HCT116 (cell line): ENCODE measurements at regions of chr4 and their contacts with region 1.

Region 1: GRCh38 chr4:158172261-158173258 is at the start of gene GASK1B:
- DNase-seq: peak; percentile 49
- ATAC-seq: peak; percentile 70
- H3K4me3 ChIP-seq: peak within 1 kb of the TSS; percentile 17 to 38; a peak in 3 of 4 replicates
- H3K27ac ChIP-seq: no peak within 1 kb of the TSS
- H3K4me1 ChIP-seq: peaks cover 13 to 30% of the 10 kb centered on the region in 2 experiments
- H3K27me3 ChIP-seq: no peaks in the 10 kb centered on the region
- CTCF ChIP-seq: peak; percentile 69 to 87 (median 74)
- POLR2A ChIP-seq: no peak
- RAD21 ChIP-seq: peak; percentile 91
- total RNA-seq, gene GASK1B: 1.3 TPM

Region 2: DNA sequence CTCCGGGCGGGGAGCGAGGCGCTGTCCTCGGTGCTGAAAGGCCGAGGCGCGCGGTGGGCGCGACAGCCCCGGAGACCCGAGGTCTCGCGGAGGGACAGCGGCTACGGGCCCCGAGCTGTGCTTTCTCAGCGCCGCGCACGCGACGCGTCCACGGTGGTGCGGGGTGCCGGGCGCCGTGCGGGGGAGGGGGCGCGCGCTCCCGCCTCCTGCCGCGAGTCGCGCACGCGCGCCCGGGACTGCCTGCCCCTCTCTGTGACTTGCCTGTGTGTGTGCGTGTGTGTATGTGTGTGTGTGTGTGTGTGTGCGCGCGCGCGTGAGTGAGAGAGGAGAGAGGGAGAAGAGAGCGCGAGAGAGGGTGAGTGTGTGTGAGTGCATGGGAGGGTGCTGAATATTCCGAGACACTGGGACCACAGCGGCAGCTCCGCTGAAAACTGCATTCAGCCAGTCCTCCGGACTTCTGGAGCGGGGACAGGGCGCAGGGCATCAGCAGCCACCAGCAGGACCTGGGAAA is 952.1 kb before region 1 on chr4 and contains the start of gene GRIA2:
- CTCF ChIA-PET with region 1: no interaction called
- POLR2A ChIA-PET with region 1: no interaction called
- RAD21 ChIA-PET with region 1: no interaction called
- intact Hi-C with region 1: loop called (anchors 5 kb)
- DNase-seq: no peak
- ATAC-seq: no peak
- H3K4me3 ChIP-seq: no peak within 1 kb of the TSS
- H3K27ac ChIP-seq: no peak within 1 kb of the TSS
- H3K4me1 ChIP-seq: no peaks in the 10 kb centered on the region
- H3K27me3 ChIP-seq: no peaks in the 10 kb centered on the region
- CTCF ChIP-seq: no peak
- POLR2A ChIP-seq: no peak
- RAD21 ChIP-seq: no peak
- total RNA-seq, gene GRIA2: not detected

Region 3: GRCh38 chr4:157992038-157992705 is 180.4 kb before region 1 on chr4:
- CTCF ChIA-PET with region 1: interaction called, 4 read pairs
- POLR2A ChIA-PET with region 1: no interaction called
- RAD21 ChIA-PET with region 1: interaction called in 1 of 2 experiments, 4 read pairs
- intact Hi-C with region 1: loop called (anchors 1 kb)
- DNase-seq: peak; percentile 73
- ATAC-seq: peak; percentile 73
- H3K4me3 ChIP-seq: peak overlapping the region; percentile 13 to 35; a peak in 3 of 4 replicates
- H3K27ac ChIP-seq: no peak overlapping the region
- H3K4me1 ChIP-seq: peaks cover 0 to 4% of the 10 kb centered on the region in 2 experiments; a peak in 2 of 4 replicates
- H3K27me3 ChIP-seq: no peaks in the 10 kb centered on the region
- CTCF ChIP-seq: peak; percentile 54 to 85 (median 65)
- POLR2A ChIP-seq: no peak
- RAD21 ChIP-seq: peak; percentile 94